ENCODE measurements at regions of chr1 and their contacts with region 1.

Region 1: GRCh38 chr1:167627865-167628641 is 2.0 kb upstream of the RCSD1 start:
- DNase-seq: peak; percentile 92
- H3K4me3 Mint-ChIP-seq: peak overlapping the region; percentile 81
- H3K27ac Mint-ChIP-seq: peak overlapping the region; percentile 94
- H3K4me1 Mint-ChIP-seq: peaks cover 55% of the 10 kb centered on the region
- H3K27me3 Mint-ChIP-seq: no peaks in the 10 kb centered on the region

Region 2: GRCh38 chr1:166166695-166167571 is 1461.1 kb before region 1 on chr1 and contains the start of gene FAM78B:
- CTCF ChIA-PET with region 1: no interaction called
- intact Hi-C with region 1: loop called (anchors 10 kb)
- DNase-seq: peak; percentile 65
- H3K4me3 Mint-ChIP-seq: peak within 1 kb of the TSS; percentile 71
- H3K27ac Mint-ChIP-seq: no peak within 1 kb of the TSS
- H3K4me1 Mint-ChIP-seq: peaks cover 30% of the 10 kb centered on the region
- H3K27me3 Mint-ChIP-seq: peaks cover 55% of the 10 kb centered on the region
- total RNA-seq, gene FAM78B: 0.24 TPM in 1 of 2 experiments, not detected in the other

Region 3: DNA sequence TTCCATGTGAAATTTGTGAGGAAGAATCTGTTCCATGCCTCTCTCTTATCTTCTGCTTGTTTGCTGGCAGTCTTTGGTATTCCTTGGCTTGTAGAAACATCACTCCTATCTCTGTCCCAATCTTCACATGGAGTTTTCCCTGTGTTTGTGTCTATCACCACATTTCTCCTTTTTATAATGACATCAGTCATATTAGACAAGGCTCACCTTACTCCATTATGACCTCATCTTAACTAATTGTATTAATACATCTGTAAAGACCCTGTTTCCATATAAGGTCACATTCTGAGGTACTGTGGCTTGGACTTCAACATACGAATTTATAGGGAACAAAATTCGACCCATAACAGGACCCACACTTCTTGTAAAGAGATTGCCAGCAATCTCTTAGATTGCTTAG is 861.1 kb before region 1 on chr1:
- CTCF ChIA-PET with region 1: no interaction called
- intact Hi-C with region 1: no loop called
- DNase-seq: no peak
- H3K4me3 Mint-ChIP-seq: no peak overlapping the region
- H3K27ac Mint-ChIP-seq: no peak overlapping the region
- H3K4me1 Mint-ChIP-seq: no peaks in the 10 kb centered on the region
- H3K27me3 Mint-ChIP-seq: no peaks in the 10 kb centered on the region

Region 4: GRCh38 chr1:167617153-167618147 is 10.6 kb before region 1 on chr1:
- CTCF ChIA-PET with region 1: interaction called, 22 read pairs
- intact Hi-C with region 1: loop called (anchors 2 kb)
- DNase-seq: peak; percentile 46
- H3K4me3 Mint-ChIP-seq: peak overlapping the region; percentile 70
- H3K27ac Mint-ChIP-seq: peak overlapping the region; percentile 90
- H3K4me1 Mint-ChIP-seq: peaks cover 48% of the 10 kb centered on the region
- H3K27me3 Mint-ChIP-seq: no peaks in the 10 kb centered on the region

Region 5: DNA sequence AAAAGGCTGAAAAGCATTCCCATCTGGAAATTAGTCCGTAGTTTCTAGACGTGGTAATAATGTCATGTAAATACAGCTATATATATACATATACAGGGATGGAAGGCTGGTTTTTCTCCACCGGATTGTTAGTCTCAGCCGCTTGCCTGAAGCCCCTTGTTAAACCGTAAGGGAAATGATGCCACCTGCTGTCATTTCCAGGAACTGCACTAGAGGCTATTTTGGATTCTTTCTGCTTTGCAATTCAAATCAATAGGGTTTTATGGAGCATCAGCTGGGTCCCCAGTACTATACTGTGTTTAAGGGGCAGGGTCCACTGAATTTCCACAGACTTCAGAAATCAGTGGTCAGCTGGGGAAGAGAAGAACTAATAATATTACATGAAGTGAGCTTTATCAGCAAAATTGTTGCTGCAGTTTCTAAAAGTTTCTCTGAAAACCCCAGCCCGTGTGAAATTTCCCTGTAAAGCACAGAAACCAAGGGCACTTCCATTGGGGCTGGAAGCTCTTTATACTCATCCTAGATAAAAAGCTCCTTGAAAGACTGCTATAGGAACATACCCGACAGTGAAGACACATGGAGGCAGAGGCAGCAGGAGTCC is 60.0 kb after region 1 on chr1:
- CTCF ChIA-PET with region 1: interaction called, 14 read pairs
- intact Hi-C with region 1: loop called (anchors 2 kb)
- DNase-seq: peak; percentile 94
- H3K4me3 Mint-ChIP-seq: no peak overlapping the region
- H3K27ac Mint-ChIP-seq: peak overlapping the region; percentile 62
- H3K4me1 Mint-ChIP-seq: peaks cover 11% of the 10 kb centered on the region
- H3K27me3 Mint-ChIP-seq: no peaks in the 10 kb centered on the region

Region 6: GRCh38 chr1:167763525-167764220 is 135.6 kb after region 1 on chr1:
- CTCF ChIA-PET with region 1: no interaction called
- intact Hi-C with region 1: loop called (anchors 2 kb)
- DNase-seq: no peak
- H3K4me3 Mint-ChIP-seq: no peak overlapping the region
- H3K27ac Mint-ChIP-seq: no peak overlapping the region
- H3K4me1 Mint-ChIP-seq: peaks cover 20% of the 10 kb centered on the region
- H3K27me3 Mint-ChIP-seq: no peaks in the 10 kb centered on the region

Region 7: DNA sequence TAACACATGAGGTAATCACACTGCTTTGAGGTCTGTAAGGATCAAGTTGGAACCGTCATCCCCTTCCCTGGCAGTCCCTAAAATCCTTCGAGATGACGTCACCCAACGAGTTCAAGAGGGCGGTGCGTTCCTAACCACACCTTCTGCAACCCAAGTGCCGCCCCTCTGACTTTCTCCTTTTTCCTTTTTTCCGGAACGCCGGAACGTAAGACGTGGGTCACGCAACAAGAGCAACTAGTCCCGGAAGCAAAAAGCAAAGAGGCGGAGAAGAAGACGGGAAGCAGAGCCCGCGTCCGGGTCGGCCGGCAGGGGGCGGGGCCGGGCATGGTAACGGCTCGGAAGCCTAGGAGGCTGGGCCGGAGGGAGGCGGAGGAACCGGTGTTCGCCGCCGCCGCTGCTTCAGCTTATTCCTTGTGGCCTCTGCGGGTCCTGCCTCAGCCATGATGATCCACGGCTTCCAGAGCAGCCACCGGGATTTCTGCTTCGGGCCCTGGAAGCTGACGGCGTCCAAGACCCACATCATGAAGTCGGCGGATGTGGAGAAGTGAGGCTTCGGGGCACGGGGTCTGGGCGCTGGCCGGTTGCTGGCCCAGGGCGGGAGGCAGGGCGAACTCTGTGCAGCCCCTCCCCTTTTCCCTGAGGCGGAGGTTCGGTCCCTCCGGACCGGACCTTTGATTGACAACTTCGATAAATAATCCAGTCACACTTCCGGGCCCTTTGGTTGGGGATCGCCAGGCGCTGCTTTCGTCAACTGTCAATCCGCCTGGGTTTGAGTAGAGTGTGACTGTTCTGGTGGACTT is 550.8 kb after region 1 on chr1 and contains the start of gene TIPRL:
- CTCF ChIA-PET with region 1: no interaction called
- intact Hi-C with region 1: loop called (anchors 1 kb)
- DNase-seq: peak; percentile 97
- H3K4me3 Mint-ChIP-seq: no peak within 1 kb of the TSS
- H3K27ac Mint-ChIP-seq: no peak within 1 kb of the TSS
- H3K4me1 Mint-ChIP-seq: peaks cover 7% of the 10 kb centered on the region
- H3K27me3 Mint-ChIP-seq: peaks cover 2% of the 10 kb centered on the region
- total RNA-seq, gene TIPRL: 76.7 to 81.3 TPM

Measured in activated naive CD4-positive, alpha-beta T cell treated with anti-CD3 and anti-CD28 coated beads for 36 hours (primary cell).